Activated B cell treated with CpG ODN at 0.5 μM for 24 hours (primary cell): ENCODE measurements at regions of chr1 and their contacts with region 1.

Region 1: DNA sequence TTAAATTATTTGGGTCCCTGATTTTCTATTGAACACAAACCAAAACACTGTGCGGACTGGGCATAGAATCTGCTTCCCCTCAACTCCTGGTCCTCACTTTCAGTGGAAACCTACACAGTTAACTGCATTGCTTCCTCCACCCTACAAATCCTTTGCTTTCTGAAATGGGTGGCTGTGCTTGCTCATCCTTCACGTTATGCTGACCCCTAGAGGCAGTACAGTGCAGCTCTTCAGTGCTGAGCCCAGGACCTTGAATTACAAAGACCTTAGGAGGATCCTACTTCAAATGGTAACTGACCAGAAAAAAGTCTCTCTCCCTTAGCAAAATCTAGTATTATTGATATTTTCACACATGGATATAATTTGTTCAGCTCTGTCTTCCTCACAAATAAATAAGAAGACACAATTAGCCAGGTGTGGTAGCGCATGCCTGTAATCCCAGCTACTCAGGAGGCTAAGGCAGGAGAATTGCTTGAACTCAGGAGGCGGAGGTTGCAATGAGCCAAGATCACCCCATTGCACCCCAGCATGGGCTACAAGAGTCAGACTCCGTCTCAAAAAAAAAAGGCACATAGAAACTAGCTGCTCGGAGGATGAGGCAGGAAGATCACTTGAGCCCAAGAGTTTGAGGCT is 63.4 kb upstream of the L1TD1 start:
- DNase-seq: no peak
- ATAC-seq: peak; percentile 45
- H3K4me3 Mint-ChIP-seq: no peak overlapping the region
- H3K27ac Mint-ChIP-seq: no peak overlapping the region
- H3K4me1 Mint-ChIP-seq: no peaks in the 10 kb centered on the region
- H3K27me3 Mint-ChIP-seq: no peaks in the 10 kb centered on the region
- CTCF ChIP-seq: no peak

Region 2: DNA sequence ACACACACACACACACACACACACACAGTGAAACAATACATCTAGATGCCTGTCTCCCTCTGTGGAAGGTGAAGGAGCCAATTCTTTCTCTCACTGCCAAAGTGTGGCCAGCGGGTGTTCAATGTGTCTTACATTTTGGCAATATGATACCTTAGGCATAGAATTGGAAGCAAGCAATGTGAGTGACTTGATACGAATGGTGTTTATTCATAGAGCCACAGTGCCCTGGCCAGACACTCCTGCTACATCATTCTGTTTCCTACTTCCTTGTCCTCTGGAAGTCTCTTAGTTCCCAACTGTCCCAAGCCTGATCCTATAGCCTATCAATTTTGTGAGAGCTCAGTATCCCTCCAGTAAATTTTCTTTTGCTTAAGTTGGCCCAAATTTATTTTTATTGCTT is 106.5 kb before region 1 on chr1:
- CTCF ChIA-PET with region 1: no interaction called
- POLR2A ChIA-PET with region 1: no interaction called
- intact Hi-C with region 1: no loop called
- DNase-seq: no peak
- ATAC-seq: no peak
- H3K4me3 Mint-ChIP-seq: no peak overlapping the region
- H3K27ac Mint-ChIP-seq: no peak overlapping the region
- H3K4me1 Mint-ChIP-seq: peaks cover 2% of the 10 kb centered on the region
- H3K27me3 Mint-ChIP-seq: no peaks in the 10 kb centered on the region
- CTCF ChIP-seq: no peak

Region 3: DNA sequence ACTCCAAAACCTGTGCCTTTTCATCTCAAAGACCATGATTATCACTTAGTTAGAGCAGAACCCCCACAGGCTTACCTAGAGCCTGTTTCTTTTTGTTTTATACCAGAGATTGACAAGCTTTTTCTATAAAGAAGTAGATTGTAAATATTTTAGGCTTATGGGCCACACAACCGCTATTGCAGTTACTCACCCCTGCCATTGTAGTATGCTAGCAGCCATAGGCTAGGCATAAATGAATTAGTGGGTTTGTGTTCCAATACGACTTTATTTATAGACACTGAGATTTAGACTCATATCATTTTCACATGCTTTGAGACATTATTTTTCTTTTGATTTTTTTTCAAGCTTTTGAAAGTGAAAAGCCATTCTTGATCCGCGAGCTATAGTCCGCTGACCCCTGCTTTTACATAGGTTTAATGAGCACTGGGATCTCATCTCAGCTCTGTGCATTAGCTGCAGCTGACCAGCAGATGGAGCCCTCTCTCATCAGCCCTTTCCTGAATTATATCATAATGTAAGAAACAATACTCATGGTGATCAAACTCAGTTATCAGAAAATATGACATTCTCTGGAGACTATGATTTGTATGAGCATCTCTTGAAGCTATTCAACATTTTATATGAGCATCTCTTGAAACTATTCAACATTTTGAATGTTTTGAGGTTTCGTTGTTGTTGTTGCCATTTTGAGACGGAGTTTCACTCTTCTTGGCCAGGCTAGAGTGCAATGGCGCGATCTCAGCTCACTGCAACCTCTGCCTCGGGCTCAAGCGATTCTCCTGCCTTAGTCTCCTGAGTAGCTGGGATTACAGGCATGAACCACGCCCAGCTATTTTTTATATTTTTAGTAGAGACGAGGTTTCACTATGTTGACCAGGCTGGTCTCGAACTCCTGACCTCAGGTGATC is 48.5 kb before region 1 on chr1:
- CTCF ChIA-PET with region 1: interaction called, 5 read pairs
- POLR2A ChIA-PET with region 1: no interaction called
- intact Hi-C with region 1: loop called (anchors 1 kb)
- DNase-seq: no peak
- ATAC-seq: no peak
- H3K4me3 Mint-ChIP-seq: no peak overlapping the region
- H3K27ac Mint-ChIP-seq: no peak overlapping the region
- H3K4me1 Mint-ChIP-seq: no peaks in the 10 kb centered on the region
- H3K27me3 Mint-ChIP-seq: no peaks in the 10 kb centered on the region
- CTCF ChIP-seq: peak; percentile 83